ENCODE measurements at regions of chr18 and their contacts with region 1.

Region 1: GRCh38 chr18:80157708-80158343 is 48.8 kb downstream of the ADNP2 start:
- DNase-seq: peak; percentile 27
- ATAC-seq: peak; percentile 63
- H3K4me3 ChIP-seq: no peak overlapping the region
- H3K27ac ChIP-seq: no peak overlapping the region
- H3K4me1 ChIP-seq: no peaks in the 10 kb centered on the region
- H3K27me3 ChIP-seq: no peaks in the 10 kb centered on the region
- CTCF ChIP-seq: peak; percentile 85 to 96 (median 86)
- EP300 ChIP-seq: no peak
- POLR2A ChIP-seq: no peak
- RAD21 ChIP-seq: peak; percentile 87

Region 2: GRCh38 chr18:79964330-79965118 is 193.3 kb before region 1 on chr18 and contains the start of gene HSBP1L1:
- CTCF ChIA-PET with region 1: interaction called, 3 read pairs
- POLR2A ChIA-PET with region 1: no interaction called
- RAD21 ChIA-PET with region 1: no interaction called
- SMC1A ChIA-PET with region 1: interaction called, 3 read pairs
- in situ Hi-C with region 1: no loop called
- intact Hi-C with region 1: loop called (anchors 2 kb)
- DNase-seq: no peak
- ATAC-seq: peak; percentile 67
- H3K4me3 ChIP-seq: peak within 1 kb of the TSS; percentile 37
- H3K27ac ChIP-seq: peak within 1 kb of the TSS; percentile 68
- H3K4me1 ChIP-seq: peaks cover 25% of the 10 kb centered on the region
- H3K27me3 ChIP-seq: no peaks in the 10 kb centered on the region
- CTCF ChIP-seq: peak in 2 of 3 experiments; percentile 10 to 19; a peak in 1 of 6 replicates
- EP300 ChIP-seq: no peak
- POLR2A ChIP-seq: peak; percentile 81
- RAD21 ChIP-seq: no peak
- polyA plus RNA-seq, gene HSBP1L1: 0.97 to 2.1 TPM

Region 3: DNA sequence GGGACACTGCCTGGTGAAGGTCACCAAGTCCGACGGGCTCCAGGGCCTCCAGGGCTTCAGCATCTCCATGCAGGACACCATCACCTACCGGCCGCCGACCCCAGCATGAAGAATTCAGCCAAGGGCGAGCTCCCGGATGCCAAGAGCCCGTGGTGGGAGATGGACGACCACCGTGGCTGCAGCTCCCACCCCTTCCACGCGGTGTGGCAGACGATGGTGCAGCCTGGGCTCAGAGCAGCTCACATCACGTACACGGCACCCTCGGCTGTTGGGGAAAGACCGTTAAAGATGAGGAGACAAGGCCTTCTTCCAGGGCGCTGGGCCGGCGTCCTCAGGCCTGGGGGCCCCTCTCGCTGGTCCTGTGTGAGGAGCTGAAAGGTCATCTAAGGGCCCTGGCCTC is 80.0 kb before region 1 on chr18:
- CTCF ChIA-PET with region 1: no interaction called
- POLR2A ChIA-PET with region 1: no interaction called
- RAD21 ChIA-PET with region 1: no interaction called
- SMC1A ChIA-PET with region 1: no interaction called
- in situ Hi-C with region 1: no loop called
- intact Hi-C with region 1: no loop called
- DNase-seq: no peak
- ATAC-seq: no peak
- H3K4me3 ChIP-seq: no peak overlapping the region
- H3K27ac ChIP-seq: no peak overlapping the region
- H3K4me1 ChIP-seq: no peaks in the 10 kb centered on the region
- H3K27me3 ChIP-seq: no peaks in the 10 kb centered on the region; a peak in 1 of 4 replicates
- CTCF ChIP-seq: no peak
- EP300 ChIP-seq: no peak
- POLR2A ChIP-seq: no peak
- RAD21 ChIP-seq: no peak

Region 4: GRCh38 chr18:80147418-80148325 is 10.2 kb before region 1 on chr18:
- CTCF ChIA-PET with region 1: interaction called, 18 read pairs
- POLR2A ChIA-PET with region 1: no interaction called
- RAD21 ChIA-PET with region 1: no interaction called
- SMC1A ChIA-PET with region 1: interaction called, 8 read pairs
- in situ Hi-C with region 1: no loop called
- intact Hi-C with region 1: no loop called
- DNase-seq: peak; percentile 60
- ATAC-seq: peak; percentile 96
- H3K4me3 ChIP-seq: peak overlapping the region; percentile 72
- H3K27ac ChIP-seq: no peak overlapping the region
- H3K4me1 ChIP-seq: peaks cover 5% of the 10 kb centered on the region
- H3K27me3 ChIP-seq: no peaks in the 10 kb centered on the region
- CTCF ChIP-seq: no peak
- EP300 ChIP-seq: no peak
- POLR2A ChIP-seq: peak; percentile 77; the same call in 1 of the 2 replicates
- RAD21 ChIP-seq: no peak

Region 5: GRCh38 chr18:80171054-80171872 is 13.4 kb after region 1 on chr18:
- CTCF ChIA-PET with region 1: interaction called, 42 read pairs
- POLR2A ChIA-PET with region 1: no interaction called
- RAD21 ChIA-PET with region 1: interaction called, 6 read pairs
- SMC1A ChIA-PET with region 1: interaction called, 4 read pairs
- in situ Hi-C with region 1: no loop called
- intact Hi-C with region 1: no loop called
- DNase-seq: no peak
- ATAC-seq: peak; percentile 87
- H3K4me3 ChIP-seq: no peak overlapping the region
- H3K27ac ChIP-seq: no peak overlapping the region
- H3K4me1 ChIP-seq: no peaks in the 10 kb centered on the region
- H3K27me3 ChIP-seq: no peaks in the 10 kb centered on the region
- CTCF ChIP-seq: peak; percentile 83 to 93 (median 83)
- EP300 ChIP-seq: no peak
- POLR2A ChIP-seq: no peak
- RAD21 ChIP-seq: peak; percentile 85

Region 6: GRCh38 chr18:80238651-80239260 is 80.9 kb after region 1 on chr18:
- CTCF ChIA-PET with region 1: interaction called, 16 read pairs
- POLR2A ChIA-PET with region 1: no interaction called
- RAD21 ChIA-PET with region 1: interaction called, 9 read pairs
- SMC1A ChIA-PET with region 1: no interaction called
- in situ Hi-C with region 1: no loop called
- intact Hi-C with region 1: no loop called
- DNase-seq: no peak
- ATAC-seq: no peak; the same call in 2 of the 3 replicates
- H3K4me3 ChIP-seq: no peak overlapping the region
- H3K27ac ChIP-seq: no peak overlapping the region
- H3K4me1 ChIP-seq: no peaks in the 10 kb centered on the region
- H3K27me3 ChIP-seq: no peaks in the 10 kb centered on the region
- CTCF ChIP-seq: no peak
- EP300 ChIP-seq: no peak
- POLR2A ChIP-seq: no peak
- RAD21 ChIP-seq: no peak

Region 7: GRCh38 chr18:80253871-80254492 is 96.2 kb after region 1 on chr18:
- CTCF ChIA-PET with region 1: interaction called, 75 read pairs
- POLR2A ChIA-PET with region 1: no interaction called
- RAD21 ChIA-PET with region 1: interaction called, 19 read pairs
- SMC1A ChIA-PET with region 1: interaction called, 19 read pairs
- in situ Hi-C with region 1: no loop called
- intact Hi-C with region 1: no loop called
- DNase-seq: no peak
- ATAC-seq: peak; percentile 87
- H3K4me3 ChIP-seq: no peak overlapping the region
- H3K27ac ChIP-seq: no peak overlapping the region
- H3K4me1 ChIP-seq: no peaks in the 10 kb centered on the region
- H3K27me3 ChIP-seq: peaks cover 0 to 2% of the 10 kb centered on the region in 2 experiments; a peak in 1 of 4 replicates
- CTCF ChIP-seq: no peak
- EP300 ChIP-seq: no peak
- POLR2A ChIP-seq: no peak
- RAD21 ChIP-seq: no peak

Measured in GM12878 (cell line).